Ascending aorta (tissue), 2 donors: ENCODE measurements at regions of chr9 and their contacts with region 1.

Region 1: GRCh38 chr9:127396808-127397497 is at the start of gene SLC2A8:
- DNase-seq: peak; percentile 97 to 99
- H3K4me3 ChIP-seq: peak within 1 kb of the TSS; percentile 75 to 95
- H3K27ac ChIP-seq: peak within 1 kb of the TSS; percentile 84 to 94
- H3K4me1 ChIP-seq: peaks cover 0 to 14% of the 10 kb centered on the region in 2 donors
- H3K27me3 ChIP-seq: no peaks in the 10 kb centered on the region
- CTCF ChIP-seq: peak in 2 of 3 experiments; percentile 10 to 38
- total RNA-seq, gene SLC2A8: 75.7 TPM

Region 2: DNA sequence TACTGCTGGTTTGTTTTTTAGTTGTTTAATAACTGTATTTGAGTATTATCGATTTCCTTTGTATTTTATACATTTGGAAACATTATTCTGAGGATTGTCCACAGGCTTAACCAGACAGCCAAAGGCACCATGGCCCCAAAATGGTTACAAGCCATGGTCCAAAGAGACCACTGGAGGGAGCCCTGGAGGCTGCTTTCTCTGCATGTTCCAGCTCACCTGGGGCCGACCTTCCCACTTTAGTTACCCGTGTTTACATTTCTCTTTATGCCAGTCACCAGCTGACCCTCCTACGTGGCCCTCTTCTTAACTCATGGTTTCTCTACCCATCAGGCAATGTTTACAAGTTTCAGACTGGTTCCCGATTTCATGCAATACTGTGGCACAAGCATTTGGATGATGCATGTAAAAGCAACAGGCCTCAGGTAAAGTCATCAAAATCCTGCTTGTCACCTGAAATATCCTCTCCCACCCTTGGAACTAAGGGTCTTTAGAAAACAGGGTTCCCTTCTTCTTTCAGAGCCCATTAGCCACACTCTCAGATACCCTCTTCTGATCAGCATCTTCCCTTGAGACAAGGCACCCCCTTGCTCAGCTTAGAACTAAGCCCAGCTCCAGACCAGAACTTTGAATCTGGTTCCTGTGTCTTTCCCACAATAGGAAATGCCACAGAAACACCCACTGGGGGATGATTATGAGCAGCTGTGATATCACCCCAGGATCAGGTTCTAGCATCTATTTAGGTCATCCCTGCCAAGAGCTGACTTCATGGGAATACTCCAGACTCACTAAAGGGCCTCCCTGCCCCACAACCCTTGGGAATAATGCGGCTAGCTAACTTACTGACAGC is 182.3 kb before region 1 on chr9:
- intact Hi-C with region 1: loop called (anchors 1 kb)
- DNase-seq: peak in 1 of 2 donors; percentile 78
- H3K4me3 ChIP-seq: no peak overlapping the region
- H3K27ac ChIP-seq: no peak overlapping the region
- H3K4me1 ChIP-seq: no peaks in the 10 kb centered on the region
- H3K27me3 ChIP-seq: no peaks in the 10 kb centered on the region
- CTCF ChIP-seq: peak; percentile 66 to 79 (median 69)

Region 3: GRCh38 chr9:127224178-127224882 is 172.6 kb before region 1 on chr9:
- intact Hi-C with region 1: loop called (anchors 1 kb)
- DNase-seq: peak; percentile 69 to 96
- H3K4me3 ChIP-seq: peak overlapping the region; percentile 59 to 99
- H3K27ac ChIP-seq: peak overlapping the region; percentile 90 to 91
- H3K4me1 ChIP-seq: peaks cover 2 to 7% of the 10 kb centered on the region in 2 donors
- H3K27me3 ChIP-seq: no peaks in the 10 kb centered on the region
- CTCF ChIP-seq: peak; percentile 23 to 49 (median 31)

Region 4: GRCh38 chr9:127311239-127311741 is 85.7 kb before region 1 on chr9:
- intact Hi-C with region 1: loop called (anchors 2 kb)
- DNase-seq: peak in 1 of 2 donors; percentile 87
- H3K4me3 ChIP-seq: no peak overlapping the region
- H3K27ac ChIP-seq: peak overlapping the region; percentile 78 to 80
- H3K4me1 ChIP-seq: peaks cover 4 to 48% of the 10 kb centered on the region in 2 donors
- H3K27me3 ChIP-seq: no peaks in the 10 kb centered on the region
- CTCF ChIP-seq: peak in 2 of 3 experiments; percentile 38 to 48

Region 5: GRCh38 chr9:127360829-127361228 is 36.1 kb before region 1 on chr9:
- intact Hi-C with region 1: loop called (anchors 2 kb)
- DNase-seq: no peak
- H3K4me3 ChIP-seq: no peak overlapping the region
- H3K27ac ChIP-seq: peak overlapping the region; percentile 80 to 84
- H3K4me1 ChIP-seq: peaks cover 5 to 26% of the 10 kb centered on the region in 2 donors
- H3K27me3 ChIP-seq: no peaks in the 10 kb centered on the region
- CTCF ChIP-seq: peak in 1 of 3 experiments; percentile 12

Region 6: DNA sequence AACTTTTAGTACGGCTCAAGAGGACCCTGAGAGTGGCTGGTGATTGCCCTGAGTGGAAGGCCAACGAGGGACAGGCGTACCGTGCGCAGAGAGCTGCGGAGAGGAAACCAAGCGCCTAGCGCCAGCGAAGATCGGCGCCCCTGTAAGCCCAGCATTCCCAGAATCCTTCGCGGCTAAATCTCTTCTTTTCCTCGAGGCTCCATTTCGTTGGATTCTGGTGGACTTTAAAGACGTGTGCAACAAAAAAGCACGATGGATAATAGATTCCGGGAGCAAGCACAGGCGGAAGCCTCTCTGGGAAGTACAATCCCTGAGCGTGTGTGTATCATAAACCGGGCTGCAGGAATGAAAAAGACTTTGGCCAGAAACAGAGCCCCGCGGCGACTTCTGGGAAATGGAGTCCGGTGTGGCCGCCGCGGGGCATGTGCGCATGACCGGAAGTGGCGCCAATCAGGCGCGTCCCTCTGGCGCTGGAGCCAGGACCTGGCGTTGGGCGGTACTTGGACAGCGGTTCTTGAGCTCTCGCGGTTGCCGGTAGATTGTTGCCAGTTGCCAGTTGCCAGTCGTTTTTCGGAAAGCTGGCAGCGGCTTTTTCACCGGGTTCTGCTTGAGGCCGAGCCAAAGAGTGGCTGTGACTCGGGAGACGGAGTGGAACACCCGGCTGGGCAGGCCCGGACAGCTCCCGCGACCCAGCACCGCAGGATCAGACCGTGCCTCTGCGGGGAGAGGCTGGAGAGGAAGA is 27.2 kb after region 1 on chr9 and contains the start of gene ZNF79:
- intact Hi-C with region 1: loop called (anchors 1 kb)
- DNase-seq: peak; percentile 80 to 96
- H3K4me3 ChIP-seq: peak within 1 kb of the TSS; percentile 86
- H3K27ac ChIP-seq: peak within 1 kb of the TSS; percentile 79 to 91
- H3K4me1 ChIP-seq: peaks cover 7 to 28% of the 10 kb centered on the region in 2 donors
- H3K27me3 ChIP-seq: no peaks in the 10 kb centered on the region
- CTCF ChIP-seq: no peak
- total RNA-seq, gene ZNF79: 2.9 TPM

Region 7: DNA sequence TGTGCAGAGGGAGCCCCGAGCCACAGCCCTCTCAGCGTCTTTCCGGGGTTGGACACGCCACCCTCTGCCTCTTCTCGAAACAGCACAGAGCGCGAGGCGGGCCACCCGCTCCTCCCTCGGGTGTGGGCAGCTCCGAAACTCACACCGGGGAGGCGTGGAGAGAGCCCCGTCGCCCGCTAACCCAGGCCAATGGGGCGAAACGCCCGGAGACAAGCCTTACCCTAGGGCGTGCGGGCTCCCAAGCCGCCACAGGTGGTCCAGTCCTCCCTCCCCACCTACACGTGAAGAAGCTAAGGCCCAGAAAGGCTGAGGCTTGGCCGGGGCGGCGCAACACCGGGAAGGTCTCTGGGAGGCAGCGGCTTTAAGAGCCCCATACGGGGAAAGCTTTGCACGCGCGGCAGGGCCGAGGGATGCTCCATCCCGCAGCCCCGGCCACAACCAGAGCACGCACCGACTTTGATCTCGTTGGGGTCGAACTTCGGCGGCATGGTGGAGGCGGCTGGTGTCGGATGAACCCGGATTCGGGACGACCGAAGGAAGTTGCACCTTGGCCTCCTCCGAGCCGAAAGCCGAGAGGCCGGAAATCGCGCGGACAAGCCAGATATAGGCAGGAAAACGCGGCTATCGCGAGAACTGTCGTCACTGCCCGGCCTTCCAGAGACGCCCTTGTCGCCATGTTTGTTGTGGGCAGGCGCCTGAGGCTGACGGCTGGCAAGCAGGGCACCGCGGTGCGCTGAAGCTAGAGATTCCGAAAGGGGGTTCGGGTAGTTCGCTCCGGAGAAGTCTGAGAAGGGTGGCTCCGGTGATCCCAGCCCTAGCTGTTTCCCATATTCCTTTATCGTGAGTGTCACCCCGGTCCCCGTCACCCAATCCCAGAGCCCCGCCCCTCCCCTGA is 54.1 kb after region 1 on chr9 and contains the starts of genes LRSAM1 and RPL12:
- intact Hi-C with region 1: loop called (anchors 1 kb)
- DNase-seq: peak; percentile 79 to 97
- H3K4me3 ChIP-seq: peak within 1 kb of the TSS; percentile 75 to 82
- H3K27ac ChIP-seq: peak within 1 kb of the TSS; percentile 91 to 94
- H3K4me1 ChIP-seq: peaks cover 9 to 20% of the 10 kb centered on the region in 2 donors
- H3K27me3 ChIP-seq: no peaks in the 10 kb centered on the region
- CTCF ChIP-seq: no peak
- total RNA-seq, gene LRSAM1: 22.8 TPM
- total RNA-seq, gene RPL12: 1,924 TPM

Region 8: DNA sequence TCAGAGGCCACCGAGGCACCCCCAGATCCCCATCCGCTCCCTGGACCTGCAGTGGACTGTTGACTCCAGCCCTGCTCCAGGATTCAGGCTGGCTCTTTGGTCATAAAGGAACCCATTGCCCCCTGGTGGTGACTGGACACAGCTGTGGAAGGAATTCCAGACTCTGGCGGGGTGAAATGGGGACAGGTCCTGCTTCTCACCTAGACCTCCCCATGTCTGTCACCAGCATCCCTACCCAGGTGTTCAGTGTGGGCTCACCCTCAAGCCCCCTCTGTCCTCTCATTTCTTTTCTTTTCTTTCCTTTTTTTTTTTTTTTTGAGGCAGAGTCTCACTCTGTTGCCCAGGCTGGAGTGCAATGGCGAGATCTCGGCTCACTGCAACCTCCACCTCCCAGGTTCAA is 189.6 kb after region 1 on chr9:
- intact Hi-C with region 1: no loop called
- DNase-seq: peak in 1 of 2 donors; percentile 92
- H3K4me3 ChIP-seq: no peak overlapping the region
- H3K27ac ChIP-seq: no peak overlapping the region
- H3K4me1 ChIP-seq: peaks cover 0 to 9% of the 10 kb centered on the region in 2 donors
- H3K27me3 ChIP-seq: no peaks in the 10 kb centered on the region
- CTCF ChIP-seq: peak; percentile 78 to 96 (median 89)